A673 (cell line): ENCODE measurements at regions of chr3 and their contacts with region 1.

Region 1: GRCh38 chr3:117059067-117059955 is 349.7 kb downstream of the TUSC7 start:
- DNase-seq: peak; percentile 60
- H3K4me3 ChIP-seq: no peak overlapping the region
- H3K27ac ChIP-seq: no peak overlapping the region
- H3K4me1 ChIP-seq: no peaks in the 10 kb centered on the region
- H3K27me3 ChIP-seq: no peaks in the 10 kb centered on the region
- CTCF ChIP-seq: peak; percentile 63

Region 2: GRCh38 chr3:117003501-117003900 is 55.8 kb before region 1 on chr3:
- CTCF ChIA-PET with region 1: no interaction called
- POLR2A ChIA-PET with region 1: no interaction called
- intact Hi-C with region 1: no loop called
- DNase-seq: no peak
- H3K4me3 ChIP-seq: no peak overlapping the region
- H3K27ac ChIP-seq: no peak overlapping the region
- H3K4me1 ChIP-seq: peaks cover 3% of the 10 kb centered on the region
- H3K27me3 ChIP-seq: no peaks in the 10 kb centered on the region
- CTCF ChIP-seq: no peak

Region 3: GRCh38 chr3:117355566-117355965 is 296.3 kb after region 1 on chr3:
- CTCF ChIA-PET with region 1: no interaction called
- POLR2A ChIA-PET with region 1: no interaction called
- intact Hi-C with region 1: loop called (anchors 1 kb)
- DNase-seq: peak; percentile 69
- H3K4me3 ChIP-seq: no peak overlapping the region
- H3K27ac ChIP-seq: no peak overlapping the region
- H3K4me1 ChIP-seq: peaks cover 2% of the 10 kb centered on the region
- H3K27me3 ChIP-seq: no peaks in the 10 kb centered on the region
- CTCF ChIP-seq: peak; percentile 57

Region 4: GRCh38 chr3:117439812-117440211 is 380.5 kb after region 1 on chr3:
- CTCF ChIA-PET with region 1: no interaction called
- POLR2A ChIA-PET with region 1: no interaction called
- intact Hi-C with region 1: loop called (anchors 5 kb)
- DNase-seq: peak; percentile 58
- H3K4me3 ChIP-seq: no peak overlapping the region
- H3K27ac ChIP-seq: no peak overlapping the region
- H3K4me1 ChIP-seq: no peaks in the 10 kb centered on the region
- H3K27me3 ChIP-seq: no peaks in the 10 kb centered on the region
- CTCF ChIP-seq: peak; percentile 59